Calu3 (cell line): ENCODE measurements at regions of chr16 and their contacts with region 1.

Region 1: GRCh38 chr16:10172848-10173655 is 9.2 kb downstream of the GRIN2A start:
- DNase-seq: no peak
- H3K4me3 Mint-ChIP-seq: no peak overlapping the region
- H3K27ac Mint-ChIP-seq: no peak overlapping the region
- H3K4me1 Mint-ChIP-seq: peaks cover 26% of the 10 kb centered on the region
- H3K27me3 Mint-ChIP-seq: no peaks in the 10 kb centered on the region
- CTCF ChIP-seq: no peak

Region 2: DNA sequence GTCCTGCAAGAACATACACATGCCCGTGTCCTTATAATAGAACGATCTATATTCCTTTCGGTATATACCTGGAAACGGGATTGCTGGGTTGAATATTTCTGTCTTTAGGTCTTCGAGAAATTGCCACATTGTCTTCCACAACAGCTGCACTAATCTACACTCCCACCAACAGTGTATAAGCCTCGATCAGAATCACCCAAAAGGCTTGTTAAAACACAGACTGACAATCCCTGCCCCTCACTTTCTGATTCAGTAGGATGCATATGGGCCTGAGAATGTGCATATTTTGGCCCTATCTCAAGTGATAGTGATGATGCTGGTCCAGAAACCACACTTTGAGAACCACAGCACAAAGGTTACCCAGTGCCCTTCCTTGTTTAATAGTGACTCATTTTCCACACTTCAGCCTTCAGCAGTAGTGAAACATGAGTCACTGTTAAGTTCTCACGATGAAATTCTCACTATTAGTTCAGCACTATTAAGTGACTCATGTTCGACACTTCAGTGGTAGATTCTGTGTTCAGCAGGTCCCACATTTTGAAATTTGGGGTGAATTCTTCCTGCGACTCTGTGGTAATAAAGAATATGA is 206.4 kb before region 1 on chr16:
- CTCF ChIA-PET with region 1: no interaction called
- intact Hi-C with region 1: loop called (anchors 10 kb)
- DNase-seq: no peak
- H3K4me3 Mint-ChIP-seq: no peak overlapping the region
- H3K27ac Mint-ChIP-seq: no peak overlapping the region
- H3K4me1 Mint-ChIP-seq: peaks cover 36% of the 10 kb centered on the region
- H3K27me3 Mint-ChIP-seq: no peaks in the 10 kb centered on the region
- CTCF ChIP-seq: no peak

Region 3: GRCh38 chr16:10114409-10114808 is 58.6 kb before region 1 on chr16:
- CTCF ChIA-PET with region 1: no interaction called
- intact Hi-C with region 1: no loop called
- DNase-seq: no peak
- H3K4me3 Mint-ChIP-seq: no peak overlapping the region
- H3K27ac Mint-ChIP-seq: peak overlapping the region; percentile 50
- H3K4me1 Mint-ChIP-seq: peaks cover 22% of the 10 kb centered on the region
- H3K27me3 Mint-ChIP-seq: no peaks in the 10 kb centered on the region
- CTCF ChIP-seq: no peak

Region 4: GRCh38 chr16:10188236-10188635 is 15.2 kb after region 1 on chr16:
- CTCF ChIA-PET with region 1: no interaction called
- intact Hi-C with region 1: no loop called
- DNase-seq: no peak
- H3K4me3 Mint-ChIP-seq: no peak overlapping the region
- H3K27ac Mint-ChIP-seq: no peak overlapping the region
- H3K4me1 Mint-ChIP-seq: peaks cover 7% of the 10 kb centered on the region
- H3K27me3 Mint-ChIP-seq: no peaks in the 10 kb centered on the region
- CTCF ChIP-seq: no peak

Region 5: DNA sequence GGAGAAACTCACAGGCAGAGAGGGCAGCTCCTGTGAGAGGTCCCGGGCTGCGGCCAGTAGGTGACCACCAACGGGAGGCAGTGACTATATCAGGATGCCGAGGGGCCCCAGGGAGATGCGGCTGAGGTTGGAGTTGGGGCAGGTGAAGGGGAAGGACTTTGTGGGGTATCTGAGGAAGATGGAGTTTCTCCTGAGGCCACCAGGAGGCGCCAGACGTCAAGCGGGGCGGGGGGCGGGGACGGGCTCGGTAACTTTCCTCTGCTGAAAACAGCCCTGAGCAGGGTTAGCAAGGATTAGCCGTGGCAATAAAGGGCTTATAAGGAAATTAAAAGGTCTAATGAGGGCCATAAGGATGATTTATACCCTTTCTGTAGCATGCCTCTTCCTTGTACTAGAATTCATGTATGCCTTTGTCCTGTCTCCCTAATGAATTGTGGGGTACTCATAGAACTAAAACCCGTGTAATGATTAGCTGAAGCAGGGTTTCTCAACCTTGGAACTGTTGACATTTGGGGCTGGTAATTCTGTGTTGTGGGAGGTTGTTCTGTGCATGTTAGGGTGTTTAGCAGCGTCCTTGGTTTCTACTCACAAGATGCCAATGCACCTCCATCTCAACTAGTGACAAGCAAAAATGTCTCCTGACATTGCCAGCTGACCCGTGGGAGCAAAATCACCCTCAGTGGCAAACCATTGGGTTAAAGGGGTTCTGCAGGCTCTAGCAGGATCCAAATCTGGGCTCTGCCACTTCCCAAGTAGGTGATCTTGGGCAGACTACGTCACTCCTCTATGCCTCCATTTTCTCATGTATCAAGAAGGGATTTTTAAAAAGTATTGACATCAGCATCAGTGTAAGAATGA is 84.0 kb after region 1 on chr16:
- CTCF ChIA-PET with region 1: no interaction called
- intact Hi-C with region 1: no loop called
- DNase-seq: peak; percentile 52
- H3K4me3 Mint-ChIP-seq: peak overlapping the region; percentile 13
- H3K27ac Mint-ChIP-seq: no peak overlapping the region
- H3K4me1 Mint-ChIP-seq: peaks cover 18% of the 10 kb centered on the region
- H3K27me3 Mint-ChIP-seq: peaks cover 9% of the 10 kb centered on the region
- CTCF ChIP-seq: peak; percentile 82